ENCODE measurements at regions of chr22 and their contacts with region 1.

Region 1: GRCh38 chr22:41857155-41857859 is 24.4 kb downstream of the SREBF2 start:
- DNase-seq: no peak
- ATAC-seq: peak; percentile 18
- H3K4me3 Mint-ChIP-seq: peak overlapping the region; percentile 45
- H3K27ac Mint-ChIP-seq: peak overlapping the region; percentile 77
- H3K4me1 Mint-ChIP-seq: peaks cover 72% of the 10 kb centered on the region
- H3K27me3 Mint-ChIP-seq: no peaks in the 10 kb centered on the region
- CTCF ChIP-seq: no peak

Region 2: DNA sequence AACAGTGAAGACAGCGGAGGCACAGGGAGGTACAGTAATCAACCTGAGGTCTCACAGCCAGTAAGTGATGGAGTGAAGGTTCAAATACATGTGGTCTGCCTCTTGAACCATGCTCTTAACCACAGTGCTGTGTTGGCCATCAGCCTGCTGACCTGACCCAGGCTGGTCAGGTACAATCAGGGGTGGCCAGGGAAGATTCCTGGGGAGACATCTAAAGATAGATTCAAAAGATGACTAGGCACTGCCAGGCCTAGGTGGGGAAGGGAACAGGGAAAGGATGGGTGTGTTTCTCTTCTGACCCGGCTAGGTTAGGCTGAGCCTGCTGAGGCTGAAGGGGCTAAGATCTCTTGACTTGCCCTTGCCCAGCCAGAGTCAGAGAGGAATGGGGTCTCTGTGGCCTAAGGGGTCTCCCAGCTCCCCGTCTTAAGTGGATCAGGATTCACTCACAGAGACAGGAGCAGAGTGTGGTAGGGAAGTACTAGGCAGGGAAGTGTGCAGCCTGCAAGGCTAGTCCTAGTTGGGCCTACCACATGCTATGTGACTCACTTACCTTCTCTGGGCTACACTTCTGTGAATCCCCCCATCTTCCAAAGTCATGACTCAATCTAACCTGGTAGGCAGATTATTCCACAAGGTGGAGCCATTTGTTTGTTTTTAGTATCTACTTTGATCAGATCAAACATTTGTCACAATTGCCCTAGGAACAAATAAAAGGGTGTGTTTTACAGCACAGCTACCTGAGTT is 34.8 kb before region 1 on chr22:
- CTCF ChIA-PET with region 1: interaction called, 9 read pairs
- POLR2A ChIA-PET with region 1: no interaction called
- intact Hi-C with region 1: loop called (anchors 1 kb)
- DNase-seq: no peak
- ATAC-seq: peak; percentile 90
- H3K4me3 Mint-ChIP-seq: no peak overlapping the region
- H3K27ac Mint-ChIP-seq: peak overlapping the region; percentile 26
- H3K4me1 Mint-ChIP-seq: peaks cover 5% of the 10 kb centered on the region
- H3K27me3 Mint-ChIP-seq: no peaks in the 10 kb centered on the region
- CTCF ChIP-seq: no peak

Region 3: DNA sequence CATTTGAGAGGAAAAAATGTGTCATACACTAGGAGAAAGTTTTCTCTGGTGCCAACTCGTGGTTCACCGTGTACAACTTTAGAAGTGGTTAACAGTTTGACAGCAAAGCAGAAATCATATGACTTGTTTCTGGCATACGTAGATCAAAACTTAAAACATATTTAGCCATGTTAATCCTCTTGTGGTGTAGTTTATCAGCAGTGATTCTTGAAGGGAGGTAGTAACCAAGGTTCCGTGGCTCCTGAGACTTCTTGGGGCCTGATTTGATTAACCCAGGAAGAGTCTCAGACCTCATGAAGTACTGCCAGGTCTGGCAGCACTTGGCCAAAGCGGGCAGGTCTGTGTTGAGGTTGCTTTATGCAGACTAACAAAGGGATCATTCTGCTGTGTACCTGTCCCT is 16.1 kb after region 1 on chr22:
- CTCF ChIA-PET with region 1: interaction called, 3 read pairs
- POLR2A ChIA-PET with region 1: interaction called, 15 read pairs
- intact Hi-C with region 1: loop called (anchors 2 kb)
- DNase-seq: no peak
- ATAC-seq: peak; percentile 29
- H3K4me3 Mint-ChIP-seq: no peak overlapping the region
- H3K27ac Mint-ChIP-seq: peak overlapping the region; percentile 48
- H3K4me1 Mint-ChIP-seq: peaks cover 20% of the 10 kb centered on the region
- H3K27me3 Mint-ChIP-seq: no peaks in the 10 kb centered on the region
- CTCF ChIP-seq: no peak

Region 4: GRCh38 chr22:41888627-41889200 is 31.4 kb after region 1 on chr22:
- CTCF ChIA-PET with region 1: interaction called, 5 read pairs
- POLR2A ChIA-PET with region 1: interaction called, 11 read pairs
- intact Hi-C with region 1: loop called (anchors 2 kb)
- DNase-seq: no peak
- ATAC-seq: peak; percentile 28
- H3K4me3 Mint-ChIP-seq: peak overlapping the region; percentile 4
- H3K27ac Mint-ChIP-seq: peak overlapping the region; percentile 74
- H3K4me1 Mint-ChIP-seq: peaks cover 59% of the 10 kb centered on the region
- H3K27me3 Mint-ChIP-seq: no peaks in the 10 kb centered on the region
- CTCF ChIP-seq: no peak

Region 5: GRCh38 chr22:41925655-41926460 is 68.6 kb after region 1 on chr22:
- CTCF ChIA-PET with region 1: interaction called, 12 read pairs
- POLR2A ChIA-PET with region 1: interaction called, 61 read pairs
- intact Hi-C with region 1: no loop called
- DNase-seq: peak; percentile 90
- ATAC-seq: peak; percentile 45
- H3K4me3 Mint-ChIP-seq: peak overlapping the region; percentile 92
- H3K27ac Mint-ChIP-seq: peak overlapping the region; percentile 94
- H3K4me1 Mint-ChIP-seq: peaks cover 83% of the 10 kb centered on the region
- H3K27me3 Mint-ChIP-seq: no peaks in the 10 kb centered on the region
- CTCF ChIP-seq: peak; percentile 26

Region 6: GRCh38 chr22:41966607-41967240 is 109.4 kb after region 1 on chr22:
- CTCF ChIA-PET with region 1: no interaction called
- POLR2A ChIA-PET with region 1: interaction called, 12 read pairs
- intact Hi-C with region 1: no loop called
- DNase-seq: no peak
- ATAC-seq: peak; percentile 89
- H3K4me3 Mint-ChIP-seq: no peak overlapping the region
- H3K27ac Mint-ChIP-seq: no peak overlapping the region
- H3K4me1 Mint-ChIP-seq: no peaks in the 10 kb centered on the region
- H3K27me3 Mint-ChIP-seq: peaks cover 10% of the 10 kb centered on the region
- CTCF ChIP-seq: no peak

Measured in activated B cell treated with CpG ODN at 0.5 μM for 24 hours (primary cell).